ENCODE measurements at regions of chr12 and their contacts with region 1.

Region 1: DNA sequence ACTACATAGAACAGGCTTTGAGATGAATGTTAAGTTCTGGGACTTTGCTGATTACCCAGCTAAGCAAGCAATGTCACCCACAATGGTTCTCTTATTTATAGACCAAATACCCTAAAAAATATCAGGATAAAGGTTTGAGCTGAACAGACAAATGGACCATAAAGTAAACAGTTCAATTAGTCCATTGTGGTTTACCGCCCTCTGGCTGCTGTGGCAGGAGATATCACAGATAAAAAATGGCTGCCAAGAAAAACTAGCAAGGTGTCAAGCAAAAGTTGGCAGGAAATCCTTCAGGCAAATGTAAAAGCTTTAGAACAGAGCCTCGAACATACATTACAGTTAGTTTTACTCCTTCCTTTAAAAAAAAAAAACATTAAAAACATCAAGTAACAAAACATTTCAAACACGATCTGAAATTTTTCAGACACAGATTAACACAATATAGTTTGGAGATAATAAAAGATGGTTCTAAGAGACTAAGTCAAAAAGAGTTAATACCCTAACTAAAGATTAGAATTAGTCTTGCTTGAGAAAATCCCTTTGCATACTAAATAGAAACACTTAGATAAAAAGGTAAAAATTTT is 41.3 kb downstream of the MED13L start:
- DNase-seq: no peak
- H3K4me3 ChIP-seq: no peak overlapping the region
- H3K27ac ChIP-seq: no peak overlapping the region
- H3K4me1 ChIP-seq: peaks cover 0 to 55% (median 42%) of the 10 kb centered on the region in 4 donors
- H3K27me3 ChIP-seq: no peaks in the 10 kb centered on the region
- CTCF ChIP-seq: peak; percentile 57 to 72 (median 62)
- EP300 ChIP-seq: no peak
- POLR2A ChIP-seq: no peak

Region 2: GRCh38 chr12:115998119-115998633 is 238.1 kb before region 1 on chr12:
- intact Hi-C with region 1: loop called (anchors 5 kb)
- DNase-seq: no peak
- H3K4me3 ChIP-seq: no peak overlapping the region
- H3K27ac ChIP-seq: peak overlapping the region in 3 of 4 donors; percentile 49 to 59 (median 59)
- H3K4me1 ChIP-seq: peaks cover 0 to 23% (median 16%) of the 10 kb centered on the region in 4 donors
- H3K27me3 ChIP-seq: no peaks in the 10 kb centered on the region
- CTCF ChIP-seq: peak; percentile 52 to 88 (median 70)
- EP300 ChIP-seq: no peak
- POLR2A ChIP-seq: no peak

Region 3: DNA sequence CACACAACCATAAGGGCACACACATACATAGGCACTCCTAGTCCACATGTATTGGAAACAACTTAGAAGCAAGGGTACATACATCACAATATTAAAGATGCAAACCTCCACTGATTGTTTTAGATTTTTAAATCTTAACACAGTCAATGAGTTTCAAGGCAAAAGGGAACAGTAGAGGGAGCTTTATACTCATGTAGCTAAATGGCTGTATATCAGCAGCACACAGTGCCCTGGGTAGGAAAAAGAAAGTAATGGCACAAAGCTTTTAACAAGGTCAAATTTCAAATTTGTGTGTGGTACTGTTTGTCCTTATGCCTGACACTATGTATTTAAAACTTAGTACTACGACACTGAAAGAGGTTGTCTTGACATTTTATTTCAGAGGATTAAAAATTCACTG is 220.7 kb before region 1 on chr12:
- intact Hi-C with region 1: loop called (anchors 1 kb)
- DNase-seq: no peak
- H3K4me3 ChIP-seq: no peak overlapping the region
- H3K27ac ChIP-seq: no peak overlapping the region
- H3K4me1 ChIP-seq: peaks cover 0 to 16% (median 4%) of the 10 kb centered on the region in 4 donors
- H3K27me3 ChIP-seq: no peaks in the 10 kb centered on the region
- CTCF ChIP-seq: peak; percentile 18 to 60 (median 48)
- EP300 ChIP-seq: no peak
- POLR2A ChIP-seq: no peak

Region 4: DNA sequence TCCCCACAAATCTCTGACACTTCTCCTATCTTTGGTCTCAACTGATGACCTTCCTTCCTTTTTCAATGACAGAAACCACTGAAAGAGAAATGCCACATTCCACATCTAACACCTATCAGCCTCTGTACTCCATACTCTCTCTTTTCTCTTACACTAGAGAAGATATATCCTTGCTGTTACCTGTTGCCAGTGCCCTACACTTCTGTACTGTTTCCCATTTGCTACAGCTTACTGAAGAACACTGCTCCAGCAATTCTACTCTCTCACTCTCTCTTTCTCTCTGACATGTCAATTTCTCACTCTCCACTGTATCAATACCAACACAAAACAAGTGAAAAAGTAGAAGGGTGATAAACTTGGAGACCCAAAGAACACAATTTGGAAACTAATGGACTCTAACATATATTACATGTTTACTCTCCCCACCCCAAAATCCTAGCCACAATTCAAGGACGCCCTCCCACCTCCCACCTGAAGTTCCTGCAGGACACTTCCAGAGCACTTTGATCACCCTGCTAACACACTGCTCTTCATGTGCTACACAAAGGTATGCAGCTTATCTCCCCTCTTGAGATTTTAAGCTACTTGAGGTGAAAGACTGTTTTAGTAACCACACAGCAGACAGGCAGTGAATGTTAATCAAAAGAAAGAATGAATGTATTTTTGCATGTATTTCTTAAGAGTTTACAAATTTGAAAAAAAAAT is 53.7 kb before region 1 on chr12:
- intact Hi-C with region 1: no loop called
- DNase-seq: no peak
- H3K4me3 ChIP-seq: no peak overlapping the region
- H3K27ac ChIP-seq: no peak overlapping the region
- H3K4me1 ChIP-seq: peaks cover 0 to 75% (median 32%) of the 10 kb centered on the region in 4 donors
- H3K27me3 ChIP-seq: no peaks in the 10 kb centered on the region
- CTCF ChIP-seq: no peak
- EP300 ChIP-seq: no peak
- POLR2A ChIP-seq: no peak

Measured in sigmoid colon (tissue), 7 donors.